ENCODE measurements at regions of chr5 and their contacts with region 1.

Region 1: GRCh38 chr5:134113902-134114875 is at the start of gene TCF7:
- DNase-seq: peak; percentile 66
- H3K4me3 Mint-ChIP-seq: peak within 1 kb of the TSS; percentile 83
- H3K27ac Mint-ChIP-seq: peak within 1 kb of the TSS; percentile 87
- H3K4me1 Mint-ChIP-seq: peaks cover 71% of the 10 kb centered on the region
- H3K27me3 Mint-ChIP-seq: peaks cover 30% of the 10 kb centered on the region
- total RNA-seq, gene TCF7: 76.3 and 77.2 TPM in 2 replicates

Region 2: GRCh38 chr5:133926489-133927299 is 187.5 kb before region 1 on chr5:
- intact Hi-C with region 1: no loop called
- DNase-seq: no peak
- H3K4me3 Mint-ChIP-seq: no peak overlapping the region
- H3K27ac Mint-ChIP-seq: peak overlapping the region; percentile 26
- H3K4me1 Mint-ChIP-seq: peaks cover 37% of the 10 kb centered on the region
- H3K27me3 Mint-ChIP-seq: peaks cover 10% of the 10 kb centered on the region

Region 3: GRCh38 chr5:134086943-134087305 is 27.3 kb before region 1 on chr5:
- intact Hi-C with region 1: loop called (anchors 1 kb)
- DNase-seq: peak; percentile 62
- H3K4me3 Mint-ChIP-seq: peak overlapping the region; percentile 66
- H3K27ac Mint-ChIP-seq: peak overlapping the region; percentile 90
- H3K4me1 Mint-ChIP-seq: peaks cover 67% of the 10 kb centered on the region
- H3K27me3 Mint-ChIP-seq: peaks cover 27% of the 10 kb centered on the region

Region 4: GRCh38 chr5:134101686-134102439 is 12.3 kb before region 1 on chr5:
- intact Hi-C with region 1: loop called (anchors 1 kb)
- DNase-seq: peak; percentile 58
- H3K4me3 Mint-ChIP-seq: peak overlapping the region; percentile 26
- H3K27ac Mint-ChIP-seq: no peak overlapping the region
- H3K4me1 Mint-ChIP-seq: peaks cover 59% of the 10 kb centered on the region
- H3K27me3 Mint-ChIP-seq: peaks cover 36% of the 10 kb centered on the region

Region 5: DNA sequence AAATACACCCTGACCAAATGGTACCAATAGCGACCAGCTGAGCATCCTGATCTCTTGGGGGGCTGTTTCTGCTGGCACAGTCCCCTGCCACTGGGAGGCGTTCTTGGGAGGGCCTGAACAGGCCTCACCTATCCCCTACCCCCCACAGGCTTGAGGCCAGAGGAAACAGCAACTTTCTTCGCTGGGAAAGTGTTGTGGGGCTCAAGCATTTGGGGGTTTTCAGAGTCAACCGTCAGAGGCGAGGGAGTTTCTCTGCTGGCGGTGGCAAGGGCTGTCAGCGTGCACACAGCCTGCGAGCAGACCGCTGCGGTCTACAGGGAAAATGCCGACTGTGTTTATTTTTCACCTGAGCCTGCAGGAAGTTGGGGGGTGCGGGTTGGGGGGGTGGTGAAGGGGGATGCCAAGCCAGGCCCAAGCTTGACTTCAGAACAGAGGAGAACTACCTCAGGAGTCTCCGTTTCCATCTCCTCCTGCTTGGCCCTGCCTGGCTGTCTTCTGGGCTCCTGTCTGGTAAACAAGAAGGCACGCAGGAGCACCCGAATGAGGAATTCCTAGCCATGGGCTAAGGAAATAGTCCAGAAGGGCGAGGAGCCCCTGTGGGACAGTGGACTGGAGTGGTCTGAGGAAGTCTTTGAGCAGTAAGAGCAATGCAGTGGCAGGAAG is 18.3 kb after region 1 on chr5:
- intact Hi-C with region 1: loop called (anchors 1 kb)
- DNase-seq: peak; percentile 74
- H3K4me3 Mint-ChIP-seq: peak overlapping the region; percentile 64
- H3K27ac Mint-ChIP-seq: peak overlapping the region; percentile 86
- H3K4me1 Mint-ChIP-seq: peaks cover 89% of the 10 kb centered on the region
- H3K27me3 Mint-ChIP-seq: peaks cover 15% of the 10 kb centered on the region

Region 6: GRCh38 chr5:134140530-134141201 is 26.5 kb after region 1 on chr5:
- intact Hi-C with region 1: loop called (anchors 1 kb)
- DNase-seq: peak; percentile 43
- H3K4me3 Mint-ChIP-seq: no peak overlapping the region
- H3K27ac Mint-ChIP-seq: no peak overlapping the region
- H3K4me1 Mint-ChIP-seq: peaks cover 65% of the 10 kb centered on the region
- H3K27me3 Mint-ChIP-seq: peaks cover 4% of the 10 kb centered on the region

Region 7: DNA sequence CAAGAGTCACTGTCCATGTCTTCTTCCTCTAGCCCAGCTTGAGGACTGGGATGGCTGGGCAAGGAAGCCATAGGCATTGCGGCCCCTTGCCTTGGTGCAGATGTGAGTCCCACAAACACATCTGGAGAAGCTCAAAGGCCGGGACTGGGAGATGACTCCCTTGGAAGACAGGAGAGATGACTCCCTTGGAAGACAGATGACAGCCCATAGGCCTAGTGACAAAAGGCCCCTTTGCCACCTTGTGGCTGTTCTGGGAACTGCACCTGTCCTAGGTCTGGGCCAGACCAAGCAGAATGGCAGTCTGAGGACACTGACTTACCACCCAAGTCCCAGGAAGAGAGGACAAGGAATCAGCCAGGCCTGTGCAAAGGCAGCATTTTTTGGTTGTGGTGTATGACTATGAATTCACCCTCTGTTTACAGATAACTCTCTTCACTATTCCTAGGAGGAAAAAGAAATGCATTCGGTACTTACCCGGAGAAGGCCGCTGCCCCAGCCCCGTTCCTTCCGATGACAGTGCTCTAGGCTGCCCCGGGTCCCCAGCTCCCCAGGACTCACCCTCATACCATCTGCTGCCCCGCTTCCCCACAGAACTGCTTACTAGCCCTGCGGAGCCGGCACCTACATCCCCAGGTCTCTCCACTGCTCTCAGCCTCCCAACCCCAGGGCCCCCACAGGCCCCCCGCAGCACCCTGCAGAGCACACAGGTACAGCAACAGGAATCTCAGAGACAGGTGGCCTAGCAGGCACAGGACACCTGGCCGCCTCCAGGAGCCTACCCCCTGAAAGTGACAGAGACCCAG is 31.8 kb after region 1 on chr5:
- intact Hi-C with region 1: loop called (anchors 1 kb)
- DNase-seq: peak; percentile 67
- H3K4me3 Mint-ChIP-seq: no peak overlapping the region
- H3K27ac Mint-ChIP-seq: peak overlapping the region; percentile 19
- H3K4me1 Mint-ChIP-seq: peaks cover 36% of the 10 kb centered on the region
- H3K27me3 Mint-ChIP-seq: no peaks in the 10 kb centered on the region

Measured in activated T-helper 1 cell treated with anti-CD3 and anti-CD28 coated beads, Interleukin-12 subunit alpha, Interleukin-12 subunit beta, Interleukin-2, Interleukin-4 antibody, amounts not matched to agents 30 ng/mL and 10 ng/mL and 1 ng/mL, durations not matched to agents 14 hours and 24 hours and 36 hours (primary cell).